AG04449 (cell line): ENCODE measurements at regions of chr1 and their contacts with region 1.

Region 1: DNA sequence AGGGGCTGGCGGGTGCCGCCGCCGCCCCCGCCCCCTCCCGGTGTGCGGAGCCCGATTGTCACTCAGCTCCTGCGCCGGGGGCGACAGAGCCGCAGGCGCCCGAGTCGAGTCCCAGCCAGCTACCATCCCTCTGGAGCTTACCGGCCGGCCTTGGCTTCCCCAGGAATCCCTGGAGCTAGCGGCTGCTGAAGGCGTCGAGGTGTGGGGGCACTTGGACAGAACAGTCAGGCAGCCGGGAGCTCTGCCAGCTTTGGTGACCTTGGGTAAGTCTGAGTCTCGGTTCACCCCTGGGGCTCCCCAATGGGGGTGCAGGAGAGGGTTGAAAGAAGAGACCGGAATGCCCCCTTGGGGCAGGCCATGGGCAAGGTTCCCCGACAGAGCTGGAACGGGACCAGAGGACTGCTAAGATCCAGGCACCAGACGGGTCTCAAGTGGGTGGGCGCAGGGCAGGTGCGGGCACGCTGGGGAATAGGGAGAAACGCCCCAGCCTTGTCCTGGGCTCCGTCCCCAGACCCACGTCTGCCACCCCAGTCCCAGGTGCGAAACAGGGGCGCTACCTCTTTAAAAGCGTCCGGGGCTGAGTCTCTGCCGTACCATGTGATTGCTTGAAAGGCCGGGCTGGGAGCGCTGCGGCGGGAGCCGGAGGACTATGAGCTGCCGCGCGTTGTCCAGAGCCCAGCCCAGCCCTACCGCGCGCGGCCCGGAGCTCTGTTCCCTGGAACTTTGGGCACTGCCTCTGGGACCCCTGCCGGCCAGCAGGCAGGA is at the start of gene ADORA1:
- DNase-seq: no peak
- H3K4me3 ChIP-seq: peak within 1 kb of the TSS; percentile 57
- CTCF ChIP-seq: peak; percentile 14

Region 2: GRCh38 chr1:203112301-203112874 is 15.5 kb before region 1 on chr1:
- CTCF ChIA-PET with region 1: interaction called, 91 read pairs
- POLR2A ChIA-PET with region 1: interaction called, 4 read pairs
- DNase-seq: no peak
- H3K4me3 ChIP-seq: no peak overlapping the region
- CTCF ChIP-seq: no peak

Region 3: DNA sequence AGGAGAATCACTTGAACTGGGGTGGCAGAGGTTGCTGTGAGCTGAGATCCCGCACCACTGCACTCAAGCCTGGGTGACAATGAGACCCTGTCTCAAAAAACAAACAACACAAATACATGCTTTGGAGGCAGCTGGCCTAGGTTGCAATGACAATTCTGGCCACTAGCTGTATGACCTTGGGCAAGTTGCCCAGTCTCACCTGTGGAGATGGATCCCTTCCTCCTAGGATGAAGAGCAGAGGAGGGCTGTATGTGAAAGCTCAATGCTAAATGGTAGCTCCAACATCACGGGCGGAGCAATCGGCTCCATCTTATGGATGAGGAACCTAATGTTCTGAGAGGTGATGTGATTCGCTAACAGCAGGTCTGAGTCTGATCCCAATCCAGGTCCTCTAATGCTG is 20.3 kb after region 1 on chr1:
- CTCF ChIA-PET with region 1: interaction called, 52 read pairs
- POLR2A ChIA-PET with region 1: interaction called, 4 read pairs
- DNase-seq: no peak
- H3K4me3 ChIP-seq: no peak overlapping the region
- CTCF ChIP-seq: peak; percentile 3

Region 4: DNA sequence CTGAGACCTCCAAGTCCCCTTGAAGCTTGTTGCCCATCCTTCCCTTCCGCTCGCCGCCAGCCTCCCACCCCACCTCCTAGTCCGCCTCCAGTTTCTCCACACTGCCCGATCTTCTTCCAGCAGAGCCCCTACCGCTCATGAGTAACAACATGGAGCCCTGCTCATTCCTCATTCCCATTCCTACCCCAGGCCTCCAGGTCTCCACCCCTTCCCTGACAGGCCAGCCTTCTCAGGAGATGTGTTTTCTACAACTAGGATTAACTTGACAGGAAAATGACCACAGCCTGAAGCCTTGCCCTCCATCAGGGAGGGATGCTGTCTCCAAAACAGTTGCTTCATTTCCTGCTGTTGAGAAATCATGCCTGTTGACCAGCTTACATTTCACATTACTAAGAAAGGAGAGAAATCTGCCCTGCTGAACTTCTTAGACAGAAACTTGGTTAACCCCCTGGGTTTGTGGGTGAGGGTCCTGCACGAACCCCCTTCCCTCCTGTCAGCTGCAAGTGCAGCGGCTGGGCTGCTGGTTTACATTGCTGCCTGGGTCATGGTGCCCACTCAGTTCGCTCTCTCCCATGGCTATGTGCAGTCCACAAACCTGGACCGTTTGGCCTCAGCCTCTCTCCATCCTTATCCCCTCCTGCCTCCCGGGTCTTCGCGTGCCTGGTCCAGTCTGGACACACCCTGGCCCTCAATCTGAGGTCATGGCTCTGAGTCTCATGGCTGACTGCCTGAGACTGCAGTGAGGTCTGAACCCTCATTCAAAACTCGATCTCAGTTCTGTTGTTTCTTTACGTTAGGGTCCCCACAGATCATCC is 74.8 kb after region 1 on chr1:
- CTCF ChIA-PET with region 1: interaction called, 594 read pairs
- POLR2A ChIA-PET with region 1: no interaction called
- DNase-seq: no peak
- H3K4me3 ChIP-seq: no peak overlapping the region
- CTCF ChIP-seq: no peak